CD4-positive, alpha-beta T cell (primary cell): ENCODE measurements at regions of chr4 and their contacts with region 1.

Region 1: GRCh38 chr4:155953151-155954114 is at the start of gene CTSO:
- DNase-seq: peak; percentile 43 to 84 (median 60)
- ATAC-seq: peak; percentile 87
- H3K4me3 ChIP-seq: peak within 1 kb of the TSS; percentile 83
- H3K4me3 Mint-ChIP-seq: peak within 1 kb of the TSS; percentile 97
- H3K27ac ChIP-seq: peak within 1 kb of the TSS; percentile 79 to 90
- H3K27ac Mint-ChIP-seq: peak within 1 kb of the TSS; percentile 96
- H3K4me1 ChIP-seq: peaks cover 9% of the 10 kb centered on the region
- H3K4me1 Mint-ChIP-seq: peaks cover 38% of the 10 kb centered on the region
- H3K27me3 ChIP-seq: no peaks in the 10 kb centered on the region
- H3K27me3 Mint-ChIP-seq: peaks cover 9% of the 10 kb centered on the region
- CTCF ChIP-seq: peak; percentile 82
- total RNA-seq, gene CTSO: 3.7 to 3.8 TPM

Region 2: GRCh38 chr4:155376387-155377268 is 576.8 kb before region 1 on chr4 and contains the start of gene MAP9:
- CTCF ChIA-PET with region 1: no interaction called
- POLR2A ChIA-PET with region 1: no interaction called
- intact Hi-C with region 1: loop called in 1 of 2 experiments (anchors 10 kb)
- DNase-seq: peak; percentile 76 to 98 (median 83)
- ATAC-seq: peak; percentile 88
- H3K4me3 ChIP-seq: peak within 1 kb of the TSS; percentile 70
- H3K4me3 Mint-ChIP-seq: peak within 1 kb of the TSS; percentile 86
- H3K27ac ChIP-seq: peak within 1 kb of the TSS; percentile 62 to 82
- H3K27ac Mint-ChIP-seq: peak within 1 kb of the TSS; percentile 88
- H3K4me1 ChIP-seq: no peaks in the 10 kb centered on the region
- H3K4me1 Mint-ChIP-seq: peaks cover 22% of the 10 kb centered on the region
- H3K27me3 ChIP-seq: no peaks in the 10 kb centered on the region
- H3K27me3 Mint-ChIP-seq: no peaks in the 10 kb centered on the region
- CTCF ChIP-seq: no peak
- total RNA-seq, gene MAP9: 15.5 to 16.5 TPM

Region 3: GRCh38 chr4:155442267-155443105 is 510.9 kb before region 1 on chr4:
- CTCF ChIA-PET with region 1: no interaction called
- POLR2A ChIA-PET with region 1: no interaction called
- intact Hi-C with region 1: loop called (anchors 2 to 5 kb)
- DNase-seq: peak; percentile 11 to 69 (median 30)
- ATAC-seq: no peak
- H3K4me3 ChIP-seq: no peak overlapping the region
- H3K4me3 Mint-ChIP-seq: no peak overlapping the region
- H3K27ac ChIP-seq: no peak overlapping the region
- H3K27ac Mint-ChIP-seq: no peak overlapping the region
- H3K4me1 ChIP-seq: no peaks in the 10 kb centered on the region
- H3K4me1 Mint-ChIP-seq: no peaks in the 10 kb centered on the region
- H3K27me3 ChIP-seq: peaks cover 0 to 3% of the 10 kb centered on the region in 2 experiments
- H3K27me3 Mint-ChIP-seq: peaks cover 14% of the 10 kb centered on the region
- CTCF ChIP-seq: peak; percentile 82

Region 4: GRCh38 chr4:155809835-155810234 is 143.6 kb before region 1 on chr4:
- CTCF ChIA-PET with region 1: no interaction called
- POLR2A ChIA-PET with region 1: interaction called, 5 read pairs
- intact Hi-C with region 1: loop called (anchors 5 to 10 kb)
- DNase-seq: peak in 3 of 14 experiments; percentile 58 to 64 (median 64)
- ATAC-seq: peak; percentile 61
- H3K4me3 ChIP-seq: no peak overlapping the region
- H3K4me3 Mint-ChIP-seq: no peak overlapping the region
- H3K27ac ChIP-seq: no peak overlapping the region
- H3K27ac Mint-ChIP-seq: no peak overlapping the region
- H3K4me1 ChIP-seq: no peaks in the 10 kb centered on the region
- H3K4me1 Mint-ChIP-seq: no peaks in the 10 kb centered on the region
- H3K27me3 ChIP-seq: no peaks in the 10 kb centered on the region
- H3K27me3 Mint-ChIP-seq: no peaks in the 10 kb centered on the region
- CTCF ChIP-seq: peak; percentile 64